K562 (cell line): ENCODE measurements at regions of chr5 and their contacts with region 1.

Region 1: GRCh38 chr5:132546108-132546507 is 2.8 kb upstream of the IL5 start:
- DNase-seq: no peak
- ATAC-seq: no peak
- H3K4me3 ChIP-seq: no peak overlapping the region
- H3K27ac ChIP-seq: no peak overlapping the region
- H3K4me1 ChIP-seq: no peaks in the 10 kb centered on the region
- H3K27me3 ChIP-seq: no peaks in the 10 kb centered on the region
- CTCF ChIP-seq: no peak
- EP300 ChIP-seq: no peak
- POLR2A ChIP-seq: no peak
- RAD21 ChIP-seq: no peak

Region 2: GRCh38 chr5:132495667-132496190 is 50.4 kb before region 1 on chr5:
- CTCF ChIA-PET with region 1: no interaction called
- POLR2A ChIA-PET with region 1: no interaction called
- in situ Hi-C with region 1: no loop called
- intact Hi-C with region 1: no loop called
- DNase-seq: peak; percentile 90 to 95 (median 94)
- ATAC-seq: peak; percentile 84
- H3K4me3 ChIP-seq: peak overlapping the region; percentile 72
- H3K27ac ChIP-seq: peak overlapping the region; percentile 87
- H3K4me1 ChIP-seq: peaks cover 47 to 61% of the 10 kb centered on the region in 2 experiments
- H3K27me3 ChIP-seq: no peaks in the 10 kb centered on the region
- CTCF ChIP-seq: peak; percentile 33 to 40 (median 39); a peak in 5 of 6 replicates
- EP300 ChIP-seq: peak; percentile 60
- POLR2A ChIP-seq: peak; percentile 61
- RAD21 ChIP-seq: peak; percentile 43 to 48

Region 3: GRCh38 chr5:132556763-132557477 is 10.8 kb after region 1 on chr5 and contains the start of gene RAD50:
- CTCF ChIA-PET with region 1: no interaction called
- POLR2A ChIA-PET with region 1: interaction called, 12 read pairs
- in situ Hi-C with region 1: no loop called
- intact Hi-C with region 1: no loop called
- DNase-seq: peak; percentile 93 to 98 (median 93)
- ATAC-seq: peak; percentile 95
- H3K4me3 ChIP-seq: peak within 1 kb of the TSS; percentile 45
- H3K27ac ChIP-seq: peak within 1 kb of the TSS; percentile 93
- H3K4me1 ChIP-seq: peaks cover 0 to 7% of the 10 kb centered on the region in 2 experiments; a peak in 1 of 5 replicates
- H3K27me3 ChIP-seq: no peaks in the 10 kb centered on the region
- CTCF ChIP-seq: 0 out of 6 replicates have a peak, but pooled peaks of 1 of the 3 experiments have one; percentile 3
- EP300 ChIP-seq: no peak
- POLR2A ChIP-seq: peak; percentile 92
- RAD21 ChIP-seq: no peak
- polyA plus RNA-seq, gene RAD50: 15.3 to 18.0 TPM

Region 4: GRCh38 chr5:132941331-132941730 is 395.2 kb after region 1 on chr5:
- CTCF ChIA-PET with region 1: no interaction called
- POLR2A ChIA-PET with region 1: no interaction called
- in situ Hi-C with region 1: no loop called
- intact Hi-C with region 1: no loop called
- DNase-seq: no peak
- ATAC-seq: no peak
- H3K4me3 ChIP-seq: no peak overlapping the region
- H3K27ac ChIP-seq: no peak overlapping the region
- H3K4me1 ChIP-seq: no peaks in the 10 kb centered on the region; a peak in 1 of 5 replicates
- H3K27me3 ChIP-seq: no peaks in the 10 kb centered on the region
- CTCF ChIP-seq: no peak
- EP300 ChIP-seq: no peak
- POLR2A ChIP-seq: no peak
- RAD21 ChIP-seq: no peak